GM10248 (cell line): ENCODE measurements at regions of chr4 and their contacts with region 1.

Region 1: DNA sequence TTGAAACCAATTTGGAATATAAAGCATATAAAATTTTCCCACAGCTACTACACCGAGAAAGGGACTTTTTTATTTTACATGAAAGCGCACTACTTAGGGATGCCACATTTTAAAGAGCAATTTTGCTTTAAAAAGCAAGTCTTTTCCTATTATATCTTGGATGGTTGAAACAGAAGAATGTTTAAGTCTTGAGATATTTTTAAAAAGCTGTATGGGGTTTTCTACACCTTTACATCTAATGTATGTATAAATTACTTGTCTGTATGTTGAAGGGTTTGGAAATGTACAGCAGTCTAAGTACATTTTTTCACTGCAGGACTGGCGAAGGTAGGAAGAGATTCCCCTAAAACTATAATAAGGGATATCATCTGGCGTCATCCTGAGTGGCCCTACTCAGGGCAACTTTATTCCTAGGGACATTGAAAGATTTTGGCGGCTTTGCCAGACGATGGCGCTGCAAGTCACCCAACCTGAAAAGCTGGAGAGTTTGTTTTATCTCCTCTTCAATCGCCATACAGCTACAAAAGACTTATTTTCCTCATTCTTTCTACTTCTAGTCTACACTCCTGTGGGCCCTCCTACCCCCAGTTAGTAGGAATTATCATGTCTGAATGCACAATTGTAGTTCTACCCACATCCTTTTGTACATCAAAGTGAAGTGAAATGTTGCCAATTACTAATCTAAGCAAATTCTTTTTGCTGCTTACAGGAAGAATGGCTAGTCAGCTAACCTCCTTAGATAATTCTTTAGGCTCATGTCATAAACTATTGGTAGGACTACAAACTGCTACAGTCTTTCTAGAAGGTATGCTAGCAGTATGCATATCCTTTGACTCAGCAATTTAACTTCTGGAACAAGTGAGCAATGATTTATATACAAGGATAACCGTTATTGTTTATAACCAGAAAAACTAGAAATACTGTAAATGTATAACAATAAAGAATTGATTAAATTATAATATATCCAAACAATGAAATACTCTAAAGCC is 782 bp upstream of the NEK1 start:
- DNase-seq: peak; percentile 52
- CTCF ChIP-seq: peak; percentile 82

Region 2: DNA sequence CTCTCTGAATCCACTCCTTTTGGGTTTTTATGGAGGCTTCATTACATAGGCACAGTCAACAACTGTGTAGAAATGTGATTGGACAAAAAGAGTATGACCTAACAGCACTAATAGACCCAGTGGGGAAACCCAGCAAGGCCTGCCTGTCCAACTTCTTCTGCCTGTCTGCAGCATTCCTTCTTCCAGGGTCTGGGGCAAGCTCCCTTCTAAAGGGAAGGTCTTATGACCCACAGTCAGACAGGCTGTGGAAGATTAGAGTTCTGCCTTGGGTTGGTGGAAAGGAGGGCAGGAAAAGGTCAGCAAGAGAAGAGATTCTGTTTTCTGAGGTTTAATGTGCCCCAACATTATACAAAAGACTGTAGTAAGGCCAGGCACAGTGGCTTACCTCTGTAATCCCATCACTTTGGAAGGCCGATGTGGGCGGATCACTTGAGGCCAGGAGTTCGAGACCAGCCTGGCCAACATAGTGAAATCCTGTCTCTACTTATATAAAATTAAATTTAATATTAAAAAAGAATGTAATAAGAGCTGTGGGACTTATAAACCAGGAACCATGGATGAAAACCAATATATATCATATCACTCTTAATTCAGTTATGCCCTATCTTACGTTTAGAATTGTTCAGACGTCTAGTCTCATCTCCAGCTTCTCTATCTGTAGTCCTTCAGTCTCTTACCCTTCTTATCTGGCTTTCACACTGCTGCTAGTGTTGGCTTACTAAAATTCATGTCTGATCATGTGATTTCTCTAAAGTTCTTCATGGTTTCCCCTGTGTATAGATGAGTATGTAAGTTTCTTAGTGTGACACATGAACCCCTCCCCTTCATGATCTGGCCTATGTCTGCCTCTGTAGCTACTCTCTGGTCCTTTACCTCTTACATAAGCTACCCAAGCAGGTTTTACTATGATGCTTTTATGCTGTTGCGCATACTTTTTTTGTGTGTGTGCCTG is 13.4 kb after region 1 on chr4:
- CTCF ChIA-PET with region 1: interaction called, 25 read pairs
- POLR2A ChIA-PET with region 1: no interaction called
- DNase-seq: no peak
- CTCF ChIP-seq: no peak

Region 3: GRCh38 chr4:169634975-169635374 is 21.8 kb after region 1 on chr4:
- CTCF ChIA-PET with region 1: interaction called, 13 read pairs
- POLR2A ChIA-PET with region 1: no interaction called
- DNase-seq: no peak
- CTCF ChIP-seq: no peak

Region 4: GRCh38 chr4:169659716-169660670 is 46.8 kb after region 1 on chr4:
- CTCF ChIA-PET with region 1: interaction called, 16 read pairs
- POLR2A ChIA-PET with region 1: no interaction called
- DNase-seq: peak; percentile 55
- CTCF ChIP-seq: no peak

Region 5: GRCh38 chr4:169757575-169758184 is 144.5 kb after region 1 on chr4 and contains the start of gene HPF1:
- CTCF ChIA-PET with region 1: interaction called, 14 read pairs
- POLR2A ChIA-PET with region 1: no interaction called
- DNase-seq: peak; percentile 96
- CTCF ChIP-seq: no peak

Region 6: GRCh38 chr4:169810325-169811323 is 197.5 kb after region 1 on chr4:
- CTCF ChIA-PET with region 1: interaction called, 13 read pairs
- POLR2A ChIA-PET with region 1: no interaction called
- DNase-seq: peak; percentile 60
- CTCF ChIP-seq: peak; percentile 75

Region 7: GRCh38 chr4:170047771-170048354 is 434.7 kb after region 1 on chr4:
- CTCF ChIA-PET with region 1: interaction called, 22 read pairs
- POLR2A ChIA-PET with region 1: no interaction called
- DNase-seq: peak; percentile 38
- CTCF ChIP-seq: peak; percentile 66